ENCODE measurements at regions of chr3 and their contacts with region 1.

Region 1: GRCh38 chr3:54830658-54831057 is 97.2 kb downstream of the LRTM1 start:
- DNase-seq: peak; percentile 75
- ATAC-seq: peak; percentile 55
- H3K4me3 ChIP-seq: no peak overlapping the region
- H3K27ac ChIP-seq: no peak overlapping the region
- H3K4me1 ChIP-seq: no peaks in the 10 kb centered on the region
- H3K27me3 ChIP-seq: no peaks in the 10 kb centered on the region
- CTCF ChIP-seq: peak; percentile 75

Region 2: DNA sequence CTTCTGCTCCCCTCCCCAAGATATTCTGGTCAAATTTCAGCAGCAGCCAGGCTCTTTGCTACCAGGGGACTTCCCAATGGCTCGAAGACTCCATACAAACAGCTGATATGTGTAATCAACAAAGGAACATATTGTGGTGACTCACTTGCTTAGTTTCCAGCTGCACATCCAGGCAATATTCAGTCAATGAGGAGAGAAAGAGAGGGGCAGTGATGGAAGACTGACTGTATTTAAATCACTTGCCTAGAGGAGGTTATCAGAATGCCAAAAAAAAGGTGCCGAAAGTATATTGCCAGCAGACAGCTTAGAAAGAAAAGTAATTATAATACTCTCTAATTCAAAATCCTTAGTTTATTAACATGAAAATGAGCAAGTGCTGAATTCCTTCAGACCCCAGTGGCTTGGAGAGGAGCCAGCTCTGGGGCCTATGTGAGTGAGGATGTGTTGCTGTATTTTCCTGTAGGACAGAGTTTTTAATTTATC is 139.3 kb before region 1 on chr3:
- CTCF ChIA-PET with region 1: no interaction called
- POLR2A ChIA-PET with region 1: no interaction called
- intact Hi-C with region 1: no loop called
- DNase-seq: no peak
- ATAC-seq: no peak
- H3K4me3 ChIP-seq: no peak overlapping the region
- H3K27ac ChIP-seq: no peak overlapping the region
- H3K4me1 ChIP-seq: no peaks in the 10 kb centered on the region
- H3K27me3 ChIP-seq: peaks cover 3% of the 10 kb centered on the region; the same call in 1 of the 2 replicates
- CTCF ChIP-seq: no peak

Region 3: GRCh38 chr3:56443372-56443771 is 1612.7 kb after region 1 on chr3:
- CTCF ChIA-PET with region 1: no interaction called
- POLR2A ChIA-PET with region 1: no interaction called
- intact Hi-C with region 1: loop called (anchors 10 kb)
- DNase-seq: no peak
- ATAC-seq: no peak
- H3K4me3 ChIP-seq: no peak overlapping the region
- H3K27ac ChIP-seq: no peak overlapping the region
- H3K4me1 ChIP-seq: no peaks in the 10 kb centered on the region
- H3K27me3 ChIP-seq: 0 out of 2 replicates have a peak, but pooled peaks cover 7% of the 10 kb centered on the region
- CTCF ChIP-seq: no peak